ENCODE measurements at regions of chr14 and their contacts with region 1.

Region 1: GRCh38 chr14:24806061-24806678 is 172.2 kb upstream of the GZMB start:
- DNase-seq: peak; percentile 91
- H3K4me3 ChIP-seq: no peak overlapping the region
- H3K27ac ChIP-seq: no peak overlapping the region
- H3K4me1 ChIP-seq: peaks cover 4% of the 10 kb centered on the region
- H3K27me3 ChIP-seq: no peaks in the 10 kb centered on the region
- CTCF ChIP-seq: peak; percentile 80

Region 2: DNA sequence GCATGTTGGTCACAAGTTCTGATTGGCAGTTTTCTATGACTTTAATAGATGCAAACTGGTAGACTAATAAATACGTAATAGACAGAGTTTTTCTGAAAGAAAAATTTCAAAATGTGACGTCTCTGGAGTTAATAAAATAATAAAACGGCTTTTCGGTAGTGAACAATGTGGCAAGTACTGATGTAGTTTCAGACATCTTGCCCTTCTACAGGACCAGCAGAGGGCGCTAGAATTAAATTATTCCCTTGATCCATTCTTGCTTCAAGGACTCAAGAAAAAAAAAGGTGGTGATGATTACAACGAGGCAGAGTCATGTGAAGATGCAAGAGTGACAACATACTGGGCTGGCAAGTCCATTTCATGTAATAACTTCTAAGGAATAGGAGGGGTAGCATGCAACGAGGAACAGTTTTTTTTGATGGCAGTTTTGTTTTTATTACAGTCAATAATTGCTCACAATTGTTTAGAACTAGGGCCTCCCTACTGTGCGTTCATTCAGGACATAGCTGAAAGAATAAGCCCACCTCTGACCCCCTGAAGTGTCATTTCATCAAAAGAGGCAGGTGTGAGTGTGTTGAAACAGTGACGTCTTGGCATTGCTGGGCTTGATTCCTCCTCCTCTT is 71.2 kb before region 1 on chr14:
- intact Hi-C with region 1: loop called (anchors 10 kb)
- DNase-seq: peak; percentile 71
- H3K4me3 ChIP-seq: no peak overlapping the region
- H3K27ac ChIP-seq: no peak overlapping the region
- H3K4me1 ChIP-seq: no peaks in the 10 kb centered on the region
- H3K27me3 ChIP-seq: no peaks in the 10 kb centered on the region
- CTCF ChIP-seq: peak; percentile 72

Region 3: GRCh38 chr14:25042362-25043299 is 236.5 kb after region 1 on chr14:
- intact Hi-C with region 1: loop called (anchors 2 kb)
- DNase-seq: peak; percentile 62
- H3K4me3 ChIP-seq: no peak overlapping the region
- H3K27ac ChIP-seq: peak overlapping the region; percentile 83
- H3K4me1 ChIP-seq: peaks cover 7% of the 10 kb centered on the region
- H3K27me3 ChIP-seq: no peaks in the 10 kb centered on the region
- CTCF ChIP-seq: peak; percentile 50

Measured in colonic mucosa (tissue), 4 donors.